ENCODE measurements at regions of chr17 and their contacts with region 1.

Region 1: GRCh38 chr17:40062329-40063186 is at the start of gene THRA:
- DNase-seq: peak; percentile 92
- total RNA-seq, gene THRA: 66.8 TPM

Region 2: GRCh38 chr17:40075201-40075941 is 12.8 kb after region 1 on chr17:
- intact Hi-C with region 1: loop called (anchors 1 kb)
- DNase-seq: no peak

Measured in cardiac septum (tissue), 1 donor.